ENCODE measurements at regions of chr22 and their contacts with region 1.

Region 1: DNA sequence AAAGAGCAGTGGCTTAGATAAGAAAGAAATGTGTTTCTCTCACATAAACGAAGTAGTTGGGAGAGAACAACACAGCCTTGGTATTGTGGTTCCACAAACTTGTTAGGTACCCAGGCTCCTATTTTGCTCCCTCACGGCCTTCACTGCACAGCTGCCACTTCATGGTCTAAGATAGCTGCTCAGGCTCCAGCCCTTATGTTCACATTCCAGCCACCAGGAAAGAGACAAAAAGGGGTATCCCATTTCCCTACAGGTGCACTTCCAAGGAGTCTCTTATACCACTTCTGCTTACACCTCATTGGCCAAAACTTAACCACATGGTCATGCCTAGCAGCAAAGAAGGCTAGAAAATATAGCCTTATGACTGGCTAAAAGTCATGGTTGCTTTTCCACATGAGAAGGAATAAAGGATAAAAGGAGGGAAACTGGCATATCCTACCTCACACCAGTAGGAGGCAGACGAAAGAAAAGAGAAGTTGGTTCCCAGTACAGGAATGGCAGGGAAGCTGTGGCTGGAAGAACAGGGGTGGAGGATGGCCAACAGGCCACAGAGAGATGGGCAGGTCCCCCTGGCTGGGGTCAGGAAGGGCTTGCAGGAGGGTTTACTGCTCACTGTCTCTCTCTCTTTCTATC is 5.4 kb upstream of the HDHD5 start:
- DNase-seq: no peak
- ATAC-seq: no peak

Region 2: GRCh38 chr22:17119481-17120202 is 44.9 kb before region 1 on chr22:
- intact Hi-C with region 1: loop called (anchors 5 kb)
- DNase-seq: peak; percentile 78
- ATAC-seq: peak; percentile 56

Measured in Right ventricle myocardium superior (tissue), 1 donor.